ENCODE measurements at regions of chr10 and their contacts with region 1.

Region 1: DNA sequence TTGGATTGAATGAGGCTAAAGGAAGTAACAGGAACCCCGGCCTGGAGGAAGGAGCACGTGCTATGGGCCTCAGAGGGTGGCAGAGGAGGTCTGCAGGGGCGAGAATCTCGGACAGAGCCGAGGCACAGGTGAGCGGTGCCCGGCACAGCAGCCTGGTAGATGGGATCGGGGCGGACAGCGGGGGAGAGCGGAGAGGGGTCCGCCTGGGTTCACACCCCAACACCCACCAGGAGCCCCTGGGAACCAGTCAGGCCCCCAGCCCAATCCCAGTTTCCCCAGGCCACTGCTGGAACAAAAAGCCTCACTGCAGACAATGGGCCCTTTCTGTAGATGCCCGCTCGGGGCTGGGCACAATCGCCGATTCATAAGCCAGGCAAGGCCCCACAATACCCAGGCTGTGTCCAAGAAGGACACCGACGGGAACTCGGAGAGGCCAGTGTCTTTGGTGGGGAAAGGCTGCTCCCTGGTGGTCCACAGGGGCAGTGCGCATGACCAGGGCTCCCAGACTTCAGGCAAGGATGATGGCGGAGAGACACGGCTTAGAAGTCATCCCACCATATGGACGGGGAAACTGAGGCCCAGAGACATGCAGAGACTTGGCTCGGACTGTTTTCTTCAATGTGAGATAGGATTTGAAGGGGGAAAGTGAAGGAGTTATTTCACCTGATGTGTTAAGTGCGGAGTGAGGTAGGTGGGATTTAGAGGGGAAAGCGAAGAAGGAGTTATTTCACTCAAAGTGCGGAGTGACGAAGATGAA is 106.9 kb upstream of the GPR26 start:
- DNase-seq: peak; percentile 68 to 80 (median 74)
- ATAC-seq: peak; percentile 91 to 99 (median 97)
- H3K4me3 ChIP-seq: no peak overlapping the region
- H3K27ac ChIP-seq: no peak overlapping the region
- H3K4me1 ChIP-seq: no peaks in the 10 kb centered on the region
- H3K27me3 ChIP-seq: no peaks in the 10 kb centered on the region
- CTCF ChIP-seq: peak; percentile 95 to 98 (median 97)
- POLR2A ChIP-seq: no peak

Region 2: GRCh38 chr10:123043409-123043925 is 515.8 kb before region 1 on chr10:
- intact Hi-C with region 1: loop called in 1 of 2 experiments (anchors 10 kb)
- DNase-seq: peak in 2 of 3 donors; percentile 30 to 68
- ATAC-seq: peak; percentile 81 to 94 (median 88)
- H3K4me3 ChIP-seq: no peak overlapping the region
- H3K27ac ChIP-seq: peak overlapping the region in 2 of 3 donors; percentile 77 to 86
- H3K4me1 ChIP-seq: peaks cover 0 to 30% (median 7%) of the 10 kb centered on the region in 4 donors
- H3K27me3 ChIP-seq: no peaks in the 10 kb centered on the region
- CTCF ChIP-seq: peak; percentile 68 to 84 (median 74)
- POLR2A ChIP-seq: no peak

Region 3: DNA sequence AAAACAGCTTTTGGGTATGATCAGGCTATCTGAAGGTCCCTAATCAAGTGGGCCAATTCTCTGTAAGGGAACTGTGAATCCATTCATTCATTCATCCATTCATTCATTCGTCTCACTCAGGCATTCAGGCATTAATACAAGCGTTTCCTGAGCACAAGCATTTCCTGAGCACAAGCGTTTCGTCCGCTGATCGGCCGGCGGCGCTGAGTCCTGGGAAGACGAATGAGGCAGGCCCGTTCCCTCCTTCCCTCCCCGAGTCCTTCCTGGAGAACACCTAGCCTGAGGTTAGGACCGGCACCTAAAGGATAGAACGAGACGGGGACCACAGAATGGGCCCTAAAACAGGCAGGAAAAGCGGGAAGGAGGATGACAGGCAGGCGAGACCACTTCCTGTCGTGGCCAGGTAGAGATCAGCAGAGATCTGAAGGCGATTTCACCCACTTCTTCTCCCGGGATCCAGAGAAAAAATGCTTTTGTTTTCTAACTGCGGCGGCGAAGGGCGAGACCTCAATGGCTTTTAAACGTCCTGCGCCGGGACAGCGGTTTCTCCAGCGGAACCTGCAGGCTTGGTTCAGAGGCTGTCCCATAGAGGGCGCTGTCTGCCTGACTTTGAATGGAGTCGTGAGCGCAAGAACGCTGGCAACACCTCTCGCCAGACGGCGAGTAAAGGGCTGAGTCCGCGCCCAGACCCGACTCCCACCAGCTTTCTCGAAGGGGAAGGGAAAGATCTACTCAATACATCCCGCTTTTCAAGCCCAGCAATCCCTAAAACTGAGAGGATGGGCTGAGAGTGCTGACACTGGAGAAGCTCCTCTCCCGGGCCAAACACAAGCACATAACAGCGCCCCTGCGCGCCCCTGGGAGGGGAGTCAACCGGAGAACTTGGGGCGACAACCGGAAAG is 426.4 kb before region 1 on chr10:
- intact Hi-C with region 1: loop called (anchors 5 to 10 kb)
- DNase-seq: peak; percentile 85 to 86 (median 86)
- ATAC-seq: peak; percentile 86 to 95 (median 94)
- H3K4me3 ChIP-seq: no peak overlapping the region
- H3K27ac ChIP-seq: no peak overlapping the region
- H3K4me1 ChIP-seq: peaks cover 0 to 37% (median 7%) of the 10 kb centered on the region in 4 donors
- H3K27me3 ChIP-seq: peaks cover 17 to 39% of the 10 kb centered on the region in 2 donors
- CTCF ChIP-seq: peak; percentile 85 to 94 (median 92)
- POLR2A ChIP-seq: no peak

Measured in right lobe of liver (tissue), 6 donors.